ENCODE measurements at regions of chr6 and their contacts with region 1.

Region 1: GRCh38 chr6:141024526-141024925 is 1108.2 kb upstream of the GJE1 start:
- DNase-seq: no peak
- H3K4me3 ChIP-seq: no peak overlapping the region
- H3K4me3 Mint-ChIP-seq: no peak overlapping the region
- H3K27ac ChIP-seq: no peak overlapping the region
- H3K27ac Mint-ChIP-seq: no peak overlapping the region
- H3K4me1 ChIP-seq: no peaks in the 10 kb centered on the region
- H3K4me1 Mint-ChIP-seq: no peaks in the 10 kb centered on the region
- H3K27me3 ChIP-seq: no peaks in the 10 kb centered on the region
- H3K27me3 Mint-ChIP-seq: no peaks in the 10 kb centered on the region

Region 2: GRCh38 chr6:140414966-140415660 is 609.4 kb before region 1 on chr6:
- CTCF ChIA-PET with region 1: no interaction called
- POLR2A ChIA-PET with region 1: no interaction called
- intact Hi-C with region 1: no loop called
- DNase-seq: no peak
- H3K4me3 ChIP-seq: no peak overlapping the region
- H3K4me3 Mint-ChIP-seq: no peak overlapping the region
- H3K27ac ChIP-seq: no peak overlapping the region
- H3K27ac Mint-ChIP-seq: no peak overlapping the region
- H3K4me1 ChIP-seq: no peaks in the 10 kb centered on the region
- H3K4me1 Mint-ChIP-seq: no peaks in the 10 kb centered on the region
- H3K27me3 ChIP-seq: no peaks in the 10 kb centered on the region
- H3K27me3 Mint-ChIP-seq: peaks cover 2 to 8% of the 10 kb centered on the region in 2 donors

Region 3: DNA sequence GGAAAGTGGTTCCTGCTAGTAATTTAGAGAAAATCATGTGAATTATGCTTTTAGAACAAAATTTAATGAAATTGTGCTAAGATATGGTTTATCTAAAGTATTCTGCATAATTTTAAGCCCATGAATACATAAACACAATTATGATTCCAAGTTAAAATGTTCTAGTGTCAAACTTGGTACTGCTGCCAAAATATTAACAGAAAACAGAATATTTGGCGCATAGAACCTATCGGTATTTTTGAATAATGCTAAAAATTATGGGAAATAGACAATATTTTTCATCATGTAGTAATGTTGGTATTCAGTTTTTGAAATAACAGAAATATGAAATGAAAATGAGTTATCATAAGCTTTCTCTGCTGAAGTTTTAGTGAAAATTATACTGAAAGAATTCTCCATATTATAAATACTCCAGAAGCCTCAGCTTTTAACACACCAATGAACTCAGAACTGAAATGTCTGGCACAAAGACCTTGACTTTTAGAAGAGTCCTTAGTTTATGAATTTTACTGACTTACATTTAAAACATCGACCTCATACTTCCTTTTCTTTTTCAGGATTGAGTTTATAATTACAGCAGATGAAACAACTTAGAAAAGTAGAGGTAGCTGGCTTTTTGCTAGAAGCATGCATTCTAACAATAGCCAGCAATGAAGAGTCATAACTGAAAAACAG is 84.1 kb before region 1 on chr6:
- CTCF ChIA-PET with region 1: no interaction called
- POLR2A ChIA-PET with region 1: no interaction called
- intact Hi-C with region 1: no loop called
- DNase-seq: no peak
- H3K4me3 ChIP-seq: no peak overlapping the region
- H3K4me3 Mint-ChIP-seq: no peak overlapping the region
- H3K27ac ChIP-seq: no peak overlapping the region
- H3K27ac Mint-ChIP-seq: no peak overlapping the region
- H3K4me1 ChIP-seq: no peaks in the 10 kb centered on the region
- H3K4me1 Mint-ChIP-seq: no peaks in the 10 kb centered on the region
- H3K27me3 ChIP-seq: no peaks in the 10 kb centered on the region
- H3K27me3 Mint-ChIP-seq: no peaks in the 10 kb centered on the region

Region 4: DNA sequence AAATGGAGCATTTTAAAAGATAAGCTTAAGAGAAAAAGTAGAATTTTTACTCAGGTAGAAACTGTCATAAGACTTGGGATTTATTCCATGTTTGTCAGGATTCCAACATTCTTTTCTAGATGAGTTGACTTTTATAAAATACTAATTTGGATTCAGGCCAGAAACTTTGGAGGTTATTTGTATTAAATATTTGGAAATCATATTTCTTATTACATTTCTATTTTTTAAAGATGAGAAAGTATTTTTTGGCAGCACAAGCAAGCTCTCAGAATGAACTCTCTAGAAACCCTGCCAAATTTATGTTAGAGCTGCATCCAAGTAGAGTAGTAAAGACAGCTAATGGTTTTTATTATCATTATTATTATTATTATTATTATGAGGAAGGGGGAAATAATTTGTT is 93.3 kb after region 1 on chr6:
- CTCF ChIA-PET with region 1: no interaction called
- POLR2A ChIA-PET with region 1: no interaction called
- intact Hi-C with region 1: loop called (anchors 5 kb)
- DNase-seq: no peak
- H3K4me3 ChIP-seq: no peak overlapping the region
- H3K4me3 Mint-ChIP-seq: no peak overlapping the region
- H3K27ac ChIP-seq: no peak overlapping the region
- H3K27ac Mint-ChIP-seq: no peak overlapping the region
- H3K4me1 ChIP-seq: no peaks in the 10 kb centered on the region
- H3K4me1 Mint-ChIP-seq: no peaks in the 10 kb centered on the region
- H3K27me3 ChIP-seq: no peaks in the 10 kb centered on the region
- H3K27me3 Mint-ChIP-seq: peaks cover 1 to 3% of the 10 kb centered on the region in 2 donors

Region 5: DNA sequence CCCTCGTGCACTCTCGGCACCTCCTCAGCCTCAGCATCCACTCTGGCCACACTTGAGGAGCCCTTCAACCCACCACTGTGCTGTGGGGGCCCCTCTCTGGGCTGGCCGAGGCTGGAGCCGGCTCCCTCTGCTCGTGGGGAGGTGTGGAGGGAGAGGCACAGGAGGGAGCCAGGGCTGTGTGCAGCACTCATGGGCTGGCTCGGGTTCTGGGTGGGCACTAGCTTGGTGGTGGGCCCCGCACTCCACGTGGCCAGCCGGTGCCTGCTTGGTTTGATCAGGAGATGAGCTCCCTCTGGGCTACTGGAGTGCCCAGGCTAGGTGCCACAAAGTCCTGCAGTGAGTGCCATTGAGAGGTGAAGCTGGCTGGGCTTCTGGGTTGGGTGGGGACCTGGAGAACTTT is 158.8 kb after region 1 on chr6:
- CTCF ChIA-PET with region 1: no interaction called
- POLR2A ChIA-PET with region 1: no interaction called
- intact Hi-C with region 1: no loop called
- DNase-seq: no peak
- H3K4me3 ChIP-seq: no peak overlapping the region
- H3K4me3 Mint-ChIP-seq: no peak overlapping the region
- H3K27ac ChIP-seq: no peak overlapping the region
- H3K27ac Mint-ChIP-seq: peak overlapping the region in 1 of 7 donors; percentile 35
- H3K4me1 ChIP-seq: no peaks in the 10 kb centered on the region
- H3K4me1 Mint-ChIP-seq: no peaks in the 10 kb centered on the region
- H3K27me3 ChIP-seq: no peaks in the 10 kb centered on the region
- H3K27me3 Mint-ChIP-seq: no peaks in the 10 kb centered on the region

Measured in CD4-positive, alpha-beta memory T cell (primary cell).